CD8-positive, alpha-beta T cell (primary cell): ENCODE measurements at regions of chr20 and their contacts with region 1.

Region 1: GRCh38 chr20:2713285-2713684 is 20.7 kb downstream of the EBF4 start:
- DNase-seq: peak in 3 of 9 experiments; percentile 24 to 75 (median 65)
- ATAC-seq: peak; percentile 73
- H3K4me3 ChIP-seq: no peak overlapping the region
- H3K4me3 Mint-ChIP-seq: no peak overlapping the region
- H3K27ac ChIP-seq: no peak overlapping the region
- H3K27ac Mint-ChIP-seq: no peak overlapping the region
- H3K4me1 ChIP-seq: peaks cover 10% of the 10 kb centered on the region
- H3K4me1 Mint-ChIP-seq: no peaks in the 10 kb centered on the region
- H3K27me3 ChIP-seq: no peaks in the 10 kb centered on the region
- H3K27me3 Mint-ChIP-seq: no peaks in the 10 kb centered on the region
- CTCF ChIP-seq: peak; percentile 34

Region 2: GRCh38 chr20:2697768-2698167 is 15.5 kb before region 1 on chr20:
- CTCF ChIA-PET with region 1: interaction called, 15 read pairs
- POLR2A ChIA-PET with region 1: no interaction called
- intact Hi-C with region 1: no loop called
- DNase-seq: peak in 1 of 9 experiments; percentile 11
- ATAC-seq: no peak
- H3K4me3 ChIP-seq: no peak overlapping the region
- H3K4me3 Mint-ChIP-seq: no peak overlapping the region
- H3K27ac ChIP-seq: no peak overlapping the region
- H3K27ac Mint-ChIP-seq: no peak overlapping the region
- H3K4me1 ChIP-seq: no peaks in the 10 kb centered on the region
- H3K4me1 Mint-ChIP-seq: no peaks in the 10 kb centered on the region
- H3K27me3 ChIP-seq: peaks cover 5 to 11% of the 10 kb centered on the region in 2 experiments
- H3K27me3 Mint-ChIP-seq: peaks cover 25% of the 10 kb centered on the region
- CTCF ChIP-seq: no peak

Region 3: GRCh38 chr20:2742934-2743559 is 29.8 kb after region 1 on chr20:
- CTCF ChIA-PET with region 1: interaction called, 449 read pairs
- POLR2A ChIA-PET with region 1: interaction called, 37 read pairs
- intact Hi-C with region 1: loop called (anchors 1 kb)
- DNase-seq: peak; percentile 46 to 89 (median 75)
- ATAC-seq: peak; percentile 62
- H3K4me3 ChIP-seq: peak overlapping the region in 1 of 2 experiments; percentile 0
- H3K4me3 Mint-ChIP-seq: peak overlapping the region; percentile 65
- H3K27ac ChIP-seq: peak overlapping the region in 1 of 2 experiments; percentile 80
- H3K27ac Mint-ChIP-seq: peak overlapping the region; percentile 79
- H3K4me1 ChIP-seq: peaks cover 46% of the 10 kb centered on the region
- H3K4me1 Mint-ChIP-seq: peaks cover 47% of the 10 kb centered on the region
- H3K27me3 ChIP-seq: no peaks in the 10 kb centered on the region
- H3K27me3 Mint-ChIP-seq: no peaks in the 10 kb centered on the region
- CTCF ChIP-seq: peak; percentile 86

Region 4: DNA sequence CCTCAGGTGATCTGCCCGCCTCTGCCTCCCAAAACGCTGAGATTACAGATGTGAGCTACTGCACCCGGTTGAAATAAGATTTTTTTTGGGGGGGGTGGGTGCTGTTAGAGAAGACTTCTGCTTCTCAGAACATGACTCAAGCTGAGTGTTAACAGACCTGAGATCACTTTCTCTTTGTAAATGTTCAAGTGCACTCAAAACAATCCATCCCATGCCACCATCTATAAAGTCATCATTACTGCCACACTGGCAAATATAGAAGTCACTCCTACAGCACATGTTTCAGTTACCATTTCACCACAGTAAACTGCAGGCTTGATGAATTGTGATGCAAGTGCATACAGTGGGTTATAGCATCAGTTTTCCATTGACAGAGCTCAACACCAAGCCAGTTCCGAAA is 136.2 kb after region 1 on chr20:
- CTCF ChIA-PET with region 1: interaction called, 6 read pairs
- POLR2A ChIA-PET with region 1: no interaction called
- intact Hi-C with region 1: loop called in 1 of 2 experiments (anchors 1 kb)
- DNase-seq: no peak
- ATAC-seq: no peak
- H3K4me3 ChIP-seq: no peak overlapping the region
- H3K4me3 Mint-ChIP-seq: no peak overlapping the region
- H3K27ac ChIP-seq: no peak overlapping the region
- H3K27ac Mint-ChIP-seq: no peak overlapping the region
- H3K4me1 ChIP-seq: peaks cover 18% of the 10 kb centered on the region
- H3K4me1 Mint-ChIP-seq: peaks cover 35% of the 10 kb centered on the region
- H3K27me3 ChIP-seq: no peaks in the 10 kb centered on the region
- H3K27me3 Mint-ChIP-seq: no peaks in the 10 kb centered on the region
- CTCF ChIP-seq: no peak